Ascending aorta (tissue), 2 donors: ENCODE measurements at regions of chr19 and their contacts with region 1.

Region 1: GRCh38 chr19:11035441-11036377 is 53.6 kb upstream of the LDLR start:
- DNase-seq: peak; percentile 70 to 96
- H3K4me3 ChIP-seq: no peak overlapping the region
- H3K27ac ChIP-seq: peak overlapping the region; percentile 2 to 54
- H3K4me1 ChIP-seq: peaks cover 4 to 5% of the 10 kb centered on the region in 2 donors
- H3K27me3 ChIP-seq: no peaks in the 10 kb centered on the region
- CTCF ChIP-seq: peak; percentile 81 to 94 (median 92)

Region 2: DNA sequence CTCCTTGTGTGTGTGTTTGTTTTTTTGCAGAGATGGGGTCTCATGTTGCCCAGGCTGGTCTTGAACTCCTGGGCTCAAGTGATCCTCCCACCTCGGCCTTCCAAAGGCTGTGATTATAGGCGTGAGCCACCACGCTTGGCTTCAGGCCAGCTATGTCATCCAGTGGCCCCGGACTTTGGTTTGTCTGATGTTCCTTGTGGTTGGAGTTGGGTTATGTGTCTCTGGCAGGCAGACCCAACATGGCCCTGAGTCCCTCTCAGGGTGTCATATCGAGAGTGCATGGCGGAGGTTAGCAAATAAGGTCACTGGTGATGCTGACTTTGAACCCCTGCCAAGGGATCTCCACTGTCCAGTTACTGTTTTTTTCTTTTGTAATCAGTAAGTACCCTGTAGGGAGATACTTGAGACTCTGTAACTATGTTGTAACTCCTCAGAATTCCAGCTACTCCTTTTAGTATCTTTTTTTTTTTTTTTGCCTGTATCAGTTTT is 37.6 kb before region 1 on chr19:
- intact Hi-C with region 1: no loop called
- DNase-seq: no peak
- H3K4me3 ChIP-seq: no peak overlapping the region
- H3K27ac ChIP-seq: no peak overlapping the region
- H3K4me1 ChIP-seq: no peaks in the 10 kb centered on the region
- H3K27me3 ChIP-seq: no peaks in the 10 kb centered on the region
- CTCF ChIP-seq: no peak

Region 3: GRCh38 chr19:11090054-11090900 is 54.6 kb after region 1 on chr19:
- intact Hi-C with region 1: loop called (anchors 2 kb)
- DNase-seq: peak; percentile 96 to 99
- H3K4me3 ChIP-seq: peak overlapping the region; percentile 45 to 82
- H3K27ac ChIP-seq: peak overlapping the region; percentile 98 to 99
- H3K4me1 ChIP-seq: peaks cover 15 to 45% of the 10 kb centered on the region in 2 donors
- H3K27me3 ChIP-seq: no peaks in the 10 kb centered on the region
- CTCF ChIP-seq: peak in 2 of 3 experiments; percentile 16